Activated CD8-positive, alpha-beta T cell treated with anti-CD3 and anti-CD28 coated beads for 36 hours (primary cell): ENCODE measurements at regions of chr22 and their contacts with region 1.

Region 1: DNA sequence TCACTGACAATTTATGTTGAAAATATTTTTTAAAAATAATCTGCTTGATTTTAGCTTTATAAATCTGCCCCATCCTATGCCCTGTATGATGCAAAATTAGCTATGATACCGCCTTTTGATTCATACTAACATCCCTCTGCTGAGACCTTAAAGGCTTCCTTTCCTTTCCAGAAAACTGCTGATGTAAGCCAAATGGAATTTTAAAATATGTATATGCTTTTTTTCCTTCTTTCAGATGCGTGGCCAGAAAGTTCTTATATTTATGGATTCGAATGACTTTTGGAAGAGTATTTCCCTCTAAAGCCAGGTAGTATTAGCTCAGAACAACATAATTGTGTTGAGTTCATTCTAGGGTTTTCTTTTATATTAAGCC is 34.5 kb downstream of the SFI1 start:
- DNase-seq: no peak
- ATAC-seq: no peak
- H3K4me3 Mint-ChIP-seq: no peak overlapping the region
- H3K27ac Mint-ChIP-seq: peak overlapping the region; percentile 88
- H3K4me1 Mint-ChIP-seq: peaks cover 68% of the 10 kb centered on the region
- H3K27me3 Mint-ChIP-seq: no peaks in the 10 kb centered on the region
- CTCF ChIP-seq: no peak

Region 2: DNA sequence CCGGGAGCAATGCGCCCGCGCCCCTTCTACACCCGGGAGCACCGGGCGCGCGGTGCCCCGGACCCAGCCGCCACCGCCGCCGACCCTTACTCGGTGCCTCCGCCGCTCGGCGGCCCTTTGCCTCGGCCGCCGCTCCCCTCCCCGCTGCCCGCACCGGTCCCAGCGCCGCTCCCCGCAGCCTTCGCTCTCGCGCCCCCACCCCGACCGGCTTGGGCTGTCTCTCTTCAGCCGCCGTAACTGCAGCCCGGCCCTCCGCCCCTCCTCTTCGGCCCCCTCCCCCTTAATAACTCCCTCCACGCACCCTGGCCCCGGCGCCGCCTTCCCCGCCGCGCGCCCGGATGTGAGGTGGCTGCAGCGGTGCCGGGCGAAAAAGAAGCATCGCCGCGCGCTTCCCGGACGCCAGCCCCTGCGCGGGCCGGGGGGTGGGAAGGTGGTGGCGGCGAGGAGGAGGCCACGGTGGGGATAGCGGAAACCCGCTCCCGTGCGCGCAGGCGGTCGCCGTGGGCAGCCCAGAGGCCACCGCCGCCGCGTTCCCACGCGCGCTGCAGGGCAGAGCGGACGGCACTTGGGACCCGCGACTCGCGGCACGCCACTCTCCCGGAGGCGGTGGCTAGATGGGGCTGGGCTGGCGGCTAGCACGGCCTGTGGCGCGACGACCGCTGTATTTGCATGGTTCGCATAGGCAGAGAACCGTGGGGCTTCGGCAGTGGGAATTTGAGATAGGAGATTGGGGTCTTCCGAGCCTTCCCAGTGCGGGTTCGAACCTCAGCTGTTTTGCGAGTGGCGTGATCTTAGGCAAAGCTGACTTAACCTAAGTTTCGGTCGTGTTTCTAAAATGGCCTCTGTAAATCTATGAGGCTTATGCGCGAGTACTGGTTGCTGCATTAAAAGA is 41.0 kb before region 1 on chr22 and contains the start of gene EIF4ENIF1:
- CTCF ChIA-PET with region 1: no interaction called
- POLR2A ChIA-PET with region 1: interaction called, 14 read pairs
- intact Hi-C with region 1: loop called (anchors 5 kb)
- DNase-seq: peak; percentile 83
- ATAC-seq: peak; percentile 78
- H3K4me3 Mint-ChIP-seq: peak within 1 kb of the TSS; percentile 93
- H3K27ac Mint-ChIP-seq: peak within 1 kb of the TSS; percentile 98
- H3K4me1 Mint-ChIP-seq: peaks cover 54% of the 10 kb centered on the region
- H3K27me3 Mint-ChIP-seq: no peaks in the 10 kb centered on the region
- CTCF ChIP-seq: no peak
- total RNA-seq, gene EIF4ENIF1: 50.3 to 50.5 TPM

Region 3: GRCh38 chr22:31520051-31520450 is 10.8 kb before region 1 on chr22:
- CTCF ChIA-PET with region 1: no interaction called
- POLR2A ChIA-PET with region 1: interaction called, 35 read pairs
- intact Hi-C with region 1: no loop called
- DNase-seq: no peak
- ATAC-seq: peak; percentile 65
- H3K4me3 Mint-ChIP-seq: no peak overlapping the region
- H3K27ac Mint-ChIP-seq: peak overlapping the region; percentile 80
- H3K4me1 Mint-ChIP-seq: peaks cover 68% of the 10 kb centered on the region
- H3K27me3 Mint-ChIP-seq: no peaks in the 10 kb centered on the region
- CTCF ChIP-seq: no peak

Region 4: DNA sequence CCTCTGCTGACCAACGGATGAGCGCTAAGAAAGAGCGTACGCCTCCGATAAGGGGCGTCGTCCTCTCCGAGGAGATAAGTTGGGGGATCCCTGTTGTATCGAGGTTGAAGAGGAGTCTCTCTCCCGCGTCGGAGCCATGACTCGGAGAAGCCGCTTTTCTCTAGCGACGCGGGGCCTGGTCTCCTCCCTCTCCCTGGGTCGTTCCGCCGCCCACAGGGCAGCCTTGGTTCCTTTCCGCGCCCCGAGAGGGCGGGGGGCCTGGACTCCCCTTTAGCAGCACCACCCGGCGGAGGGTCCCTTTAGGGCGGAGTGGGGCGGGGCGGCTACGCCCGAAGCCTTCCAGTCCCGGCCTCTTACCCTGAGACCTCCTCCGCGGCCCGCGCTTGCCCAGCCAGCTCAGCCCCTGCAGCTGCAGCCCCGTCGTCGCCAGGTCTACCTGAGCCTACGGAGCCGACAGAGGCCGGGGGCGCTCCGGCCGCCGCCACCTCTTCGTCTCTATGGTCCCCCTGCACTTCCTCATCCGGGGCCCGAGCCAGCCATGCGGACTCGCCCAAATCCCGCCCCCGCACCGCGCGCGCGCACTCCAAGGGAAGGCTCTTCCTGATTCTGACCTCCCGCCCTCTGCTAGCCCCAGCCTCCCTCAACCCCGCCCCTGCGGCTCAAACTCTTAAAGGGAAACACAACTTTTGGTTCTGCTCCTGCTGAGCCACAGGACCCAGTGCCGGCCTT is 219.0 kb after region 1 on chr22 and contains the start of gene PRR14L:
- CTCF ChIA-PET with region 1: no interaction called
- POLR2A ChIA-PET with region 1: no interaction called
- intact Hi-C with region 1: no loop called
- DNase-seq: peak; percentile 100
- ATAC-seq: peak; percentile 77
- H3K4me3 Mint-ChIP-seq: peak within 1 kb of the TSS; percentile 89
- H3K27ac Mint-ChIP-seq: peak within 1 kb of the TSS; percentile 90
- H3K4me1 Mint-ChIP-seq: peaks cover 48% of the 10 kb centered on the region
- H3K27me3 Mint-ChIP-seq: no peaks in the 10 kb centered on the region
- CTCF ChIP-seq: no peak
- total RNA-seq, gene PRR14L: 40.2 to 45.1 TPM